Transverse colon (tissue), 4 donors: ENCODE measurements at regions of chr6 and their contacts with region 1.

Region 1: GRCh38 chr6:30013291-30013922 is 47.7 kb upstream of the POLR1H start:
- DNase-seq: no peak
- H3K4me3 ChIP-seq: no peak overlapping the region
- H3K27ac ChIP-seq: no peak overlapping the region
- H3K4me1 ChIP-seq: no peaks in the 10 kb centered on the region
- H3K27me3 ChIP-seq: peaks cover under 1% of the 10 kb centered on the region
- CTCF ChIP-seq: peak; percentile 60 to 90 (median 71)
- EP300 ChIP-seq: no peak
- POLR2A ChIP-seq: no peak

Region 2: DNA sequence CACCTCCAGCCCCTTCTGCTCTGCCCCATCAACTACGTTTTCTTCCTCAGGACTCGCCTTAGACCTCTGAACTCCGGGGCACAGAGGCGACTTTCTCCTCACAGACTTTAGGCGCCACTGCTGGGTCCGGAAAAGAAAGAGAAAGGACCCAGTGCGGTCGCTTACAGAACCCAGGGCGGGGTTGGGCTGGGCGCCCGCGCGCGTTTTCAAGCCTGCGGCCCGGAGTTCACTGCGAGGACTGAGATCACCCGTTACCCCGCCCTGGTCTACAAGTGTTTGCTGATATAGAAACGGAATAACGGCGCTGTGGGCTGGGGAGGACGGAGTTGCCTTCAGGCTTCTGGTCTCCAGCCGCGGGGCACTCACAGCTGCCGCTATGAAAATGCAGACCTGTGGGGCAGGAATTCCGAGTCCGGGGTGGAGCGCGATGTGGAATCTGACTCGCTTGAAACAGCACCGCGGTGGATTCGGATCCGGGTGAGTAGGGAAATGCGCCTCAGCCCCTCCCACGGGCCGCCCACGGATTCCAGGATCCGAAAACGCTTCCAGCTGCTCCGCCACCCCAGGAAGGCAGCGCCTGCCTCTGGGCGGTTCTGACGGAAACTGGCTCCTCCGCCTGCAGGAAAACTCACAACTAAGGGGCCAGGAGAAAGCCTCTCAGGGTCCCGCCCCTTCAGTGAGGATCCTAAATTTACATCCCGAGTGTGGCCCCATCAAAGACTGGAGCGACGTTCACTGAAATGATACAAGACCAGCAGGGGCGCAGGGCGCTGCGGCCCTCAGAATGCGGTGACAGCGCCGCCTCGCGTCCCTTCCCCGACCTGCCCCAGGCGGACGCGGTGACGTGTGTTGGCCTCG is 260.7 kb before region 1 on chr6:
- in situ Hi-C with region 1: loop called in 2 of 4 experiments (anchors 25 kb)
- intact Hi-C with region 1: no loop called
- DNase-seq: peak; percentile 91
- H3K4me3 ChIP-seq: peak overlapping the region; percentile 64 to 81 (median 66)
- H3K27ac ChIP-seq: peak overlapping the region; percentile 88 to 95 (median 93)
- H3K4me1 ChIP-seq: peaks cover 4 to 29% (median 25%) of the 10 kb centered on the region in 4 donors
- H3K27me3 ChIP-seq: peaks cover 5% of the 10 kb centered on the region
- CTCF ChIP-seq: peak; percentile 87 to 97 (median 91)
- EP300 ChIP-seq: no peak
- POLR2A ChIP-seq: peak; percentile 28

Region 3: GRCh38 chr6:29777310-29777709 is 236.1 kb before region 1 on chr6:
- in situ Hi-C with region 1: no loop called
- intact Hi-C with region 1: no loop called
- DNase-seq: no peak
- H3K4me3 ChIP-seq: no peak overlapping the region
- H3K27ac ChIP-seq: no peak overlapping the region
- H3K4me1 ChIP-seq: no peaks in the 10 kb centered on the region
- H3K27me3 ChIP-seq: peaks cover 26% of the 10 kb centered on the region
- CTCF ChIP-seq: no peak
- EP300 ChIP-seq: no peak
- POLR2A ChIP-seq: no peak

Region 4: DNA sequence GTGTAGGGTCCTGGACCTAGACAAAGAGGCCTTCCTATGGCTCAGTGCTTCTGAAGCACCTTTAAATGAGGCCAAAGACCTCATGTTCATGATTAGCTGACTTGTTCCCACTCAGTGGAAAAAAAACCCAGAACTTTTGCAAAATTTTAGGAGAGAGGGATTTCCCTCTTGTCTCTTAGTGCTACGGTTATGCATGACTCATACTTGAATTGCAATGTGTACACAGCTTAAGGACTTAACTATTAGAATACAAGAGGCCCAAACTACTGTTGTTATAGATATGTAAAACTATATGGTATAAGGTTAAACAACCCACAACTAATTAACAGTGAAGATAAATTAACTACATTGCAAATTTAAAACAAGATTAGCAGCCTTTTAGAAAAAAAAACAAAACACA is 103.4 kb before region 1 on chr6:
- in situ Hi-C with region 1: no loop called
- intact Hi-C with region 1: no loop called
- DNase-seq: no peak
- H3K4me3 ChIP-seq: no peak overlapping the region
- H3K27ac ChIP-seq: no peak overlapping the region
- H3K4me1 ChIP-seq: no peaks in the 10 kb centered on the region
- H3K27me3 ChIP-seq: no peaks in the 10 kb centered on the region
- CTCF ChIP-seq: no peak
- EP300 ChIP-seq: no peak
- POLR2A ChIP-seq: no peak

Region 5: DNA sequence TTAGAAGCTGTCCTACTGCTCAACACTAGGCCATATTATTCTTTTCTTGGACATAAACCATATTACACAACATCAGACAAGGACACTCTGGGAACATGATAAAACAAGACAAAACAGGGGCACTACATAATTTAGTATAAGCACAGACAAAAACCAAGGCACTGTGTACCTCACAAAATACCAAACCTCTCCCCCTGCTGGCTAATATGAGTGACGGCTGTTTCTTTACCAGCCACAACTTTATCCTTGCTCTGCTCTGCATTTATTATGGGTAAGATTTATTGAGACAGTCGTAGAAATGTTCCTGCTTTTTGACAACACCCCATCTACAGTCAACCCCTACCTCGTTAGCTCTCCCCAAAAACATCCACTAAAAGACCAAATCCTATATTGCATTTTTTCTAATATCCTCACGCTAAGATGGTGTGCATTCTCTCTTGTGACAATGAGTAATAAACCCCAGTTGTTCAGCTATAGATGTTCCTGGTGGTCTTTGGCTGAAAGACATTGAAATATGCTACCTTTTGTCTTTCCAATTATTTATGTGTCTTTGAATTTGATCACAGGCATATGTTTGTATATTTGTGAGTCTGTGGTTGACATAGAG is 23.9 kb after region 1 on chr6:
- in situ Hi-C with region 1: no loop called
- intact Hi-C with region 1: no loop called
- DNase-seq: no peak
- H3K4me3 ChIP-seq: no peak overlapping the region
- H3K27ac ChIP-seq: no peak overlapping the region
- H3K4me1 ChIP-seq: no peaks in the 10 kb centered on the region
- H3K27me3 ChIP-seq: no peaks in the 10 kb centered on the region
- CTCF ChIP-seq: peak in 2 of 5 experiments; percentile 14 to 40
- EP300 ChIP-seq: no peak
- POLR2A ChIP-seq: no peak

Region 6: GRCh38 chr6:30447237-30447636 is 433.8 kb after region 1 on chr6:
- in situ Hi-C with region 1: no loop called
- intact Hi-C with region 1: no loop called
- DNase-seq: no peak
- H3K4me3 ChIP-seq: no peak overlapping the region
- H3K27ac ChIP-seq: no peak overlapping the region
- H3K4me1 ChIP-seq: peaks cover 2 to 25% (median 6%) of the 10 kb centered on the region in 4 donors
- H3K27me3 ChIP-seq: peaks cover 100% of the 10 kb centered on the region
- CTCF ChIP-seq: no peak
- EP300 ChIP-seq: no peak
- POLR2A ChIP-seq: no peak